ENCODE measurements at regions of chr10 and their contacts with region 1.

Region 1: GRCh38 chr10:43671656-43672531 is 23.2 kb upstream of the ZNF32 start:
- DNase-seq: peak; percentile 75
- CTCF ChIP-seq: peak; percentile 70

Region 2: GRCh38 chr10:43683451-43684291 is 11.8 kb after region 1 on chr10:
- CTCF ChIA-PET with region 1: interaction called, 25 read pairs
- POLR2A ChIA-PET with region 1: no interaction called
- DNase-seq: peak; percentile 41
- CTCF ChIP-seq: peak; percentile 33

Region 3: GRCh38 chr10:44864637-44865288 is 1192.9 kb after region 1 on chr10:
- CTCF ChIA-PET with region 1: interaction called, 13 read pairs
- POLR2A ChIA-PET with region 1: no interaction called
- DNase-seq: peak; percentile 89
- CTCF ChIP-seq: peak; percentile 96

Measured in GM10248 (cell line).